ENCODE measurements at regions of chr6 and their contacts with region 1.

Region 1: DNA sequence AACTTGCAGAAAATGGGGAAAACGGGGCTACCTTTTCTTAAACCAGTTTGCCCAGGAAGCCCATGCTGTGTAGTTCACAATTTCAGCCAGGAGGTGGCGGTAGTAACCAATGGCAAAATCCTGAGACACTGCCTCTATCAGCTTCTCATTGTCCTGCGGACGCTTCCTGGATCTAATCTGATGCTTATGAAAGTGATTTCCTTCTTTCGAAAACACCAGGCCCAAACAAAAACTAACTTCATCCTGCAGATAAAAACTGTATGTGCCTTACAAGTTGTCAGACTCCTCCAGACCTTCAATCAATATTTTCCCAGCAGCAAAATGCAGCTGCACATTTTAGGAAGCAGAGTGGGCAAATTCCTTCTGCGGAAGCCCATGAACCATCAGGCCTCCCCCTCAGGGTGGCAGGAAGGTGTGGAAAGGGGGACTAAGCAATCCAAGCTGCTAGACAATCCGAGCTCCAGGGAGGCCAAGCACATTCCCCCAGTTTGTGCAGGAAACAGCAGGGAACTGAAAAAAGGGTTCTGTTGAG is 88.5 kb downstream of the LY86 start:
- DNase-seq: no peak
- H3K4me3 ChIP-seq: no peak overlapping the region
- H3K27me3 ChIP-seq: no peaks in the 10 kb centered on the region
- CTCF ChIP-seq: peak; percentile 92

Region 2: GRCh38 chr6:6689400-6690143 is 12.6 kb after region 1 on chr6:
- CTCF ChIA-PET with region 1: interaction called, 16 read pairs
- POLR2A ChIA-PET with region 1: no interaction called
- DNase-seq: no peak
- H3K4me3 ChIP-seq: no peak overlapping the region
- H3K27me3 ChIP-seq: no peaks in the 10 kb centered on the region
- CTCF ChIP-seq: no peak

Region 3: DNA sequence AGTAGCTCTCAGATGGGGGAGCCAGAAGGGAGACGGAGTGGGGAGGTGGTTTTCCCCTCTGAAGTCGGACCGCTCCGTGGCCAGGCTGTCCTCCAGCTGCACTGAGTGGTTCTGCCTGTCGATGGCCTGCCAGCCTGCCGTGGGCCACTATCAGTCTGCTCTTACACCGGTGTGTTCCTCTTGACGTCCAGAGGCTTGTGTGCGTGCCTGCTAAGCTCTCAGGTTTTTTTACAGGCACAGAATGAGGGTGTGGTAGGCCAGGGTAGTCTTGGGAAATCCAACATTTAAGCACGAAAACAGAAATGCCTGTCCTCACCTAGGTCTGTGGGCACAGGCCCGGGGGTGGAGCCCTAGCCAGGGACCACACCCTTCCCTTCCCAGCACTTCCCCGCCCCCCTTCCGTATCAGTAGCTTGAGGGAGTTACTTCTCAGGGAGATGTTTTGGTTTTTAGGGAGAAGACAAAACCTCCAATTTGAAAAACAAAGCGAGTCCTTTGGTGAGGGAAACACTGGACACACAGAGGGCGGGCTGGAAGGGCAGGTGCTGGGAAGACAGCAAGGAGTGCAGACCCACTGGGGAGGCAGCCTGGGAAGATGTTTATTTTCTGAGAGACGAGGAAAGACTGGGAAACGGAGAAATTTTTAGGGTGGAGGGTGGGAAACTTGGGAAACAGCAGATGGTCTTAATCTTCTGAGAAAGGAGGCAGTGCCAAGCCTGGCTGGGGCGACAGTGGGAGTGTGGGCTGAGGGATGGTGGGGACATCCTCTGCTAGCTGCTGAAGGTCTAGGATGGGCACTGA is 18.0 kb after region 1 on chr6:
- CTCF ChIA-PET with region 1: interaction called, 16 read pairs
- POLR2A ChIA-PET with region 1: no interaction called
- DNase-seq: no peak
- H3K4me3 ChIP-seq: no peak overlapping the region
- H3K27me3 ChIP-seq: no peaks in the 10 kb centered on the region
- CTCF ChIP-seq: no peak

Region 4: DNA sequence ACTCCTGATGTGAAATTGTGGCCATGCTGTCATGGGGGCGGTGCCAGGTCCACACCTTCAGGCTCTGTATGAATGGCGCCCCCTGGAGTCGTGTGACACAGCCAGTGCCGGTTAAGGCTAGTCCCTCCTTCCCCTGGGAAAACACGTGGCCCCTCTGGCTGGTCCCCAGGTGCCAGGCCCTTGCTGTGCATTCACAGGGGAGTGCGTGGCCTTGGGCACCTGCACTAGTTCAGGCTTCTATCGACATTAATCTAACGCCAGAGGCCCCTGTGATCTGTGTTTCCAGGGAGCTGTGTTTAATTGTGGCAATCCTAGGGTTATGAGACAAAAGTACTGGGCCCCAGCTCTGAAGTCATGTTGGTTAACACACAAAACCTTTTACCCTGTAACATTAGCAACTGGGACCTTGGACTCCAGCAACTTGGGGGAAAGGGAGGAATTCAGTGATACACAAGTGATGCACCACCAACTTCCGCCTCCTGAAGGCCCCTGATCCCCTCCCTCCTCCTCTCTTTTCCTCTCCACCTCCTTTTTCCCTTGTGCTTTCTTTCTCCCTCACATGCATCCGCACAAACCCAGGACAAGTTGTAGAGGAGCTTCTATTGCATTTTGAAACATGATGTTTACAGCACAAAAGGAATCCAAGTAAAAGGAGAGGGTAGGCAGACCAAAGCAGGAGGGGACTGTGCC is 562.1 kb after region 1 on chr6:
- CTCF ChIA-PET with region 1: interaction called, 19 read pairs
- POLR2A ChIA-PET with region 1: no interaction called
- DNase-seq: no peak
- H3K4me3 ChIP-seq: no peak overlapping the region
- H3K27me3 ChIP-seq: no peaks in the 10 kb centered on the region
- CTCF ChIP-seq: peak; percentile 69

Region 5: DNA sequence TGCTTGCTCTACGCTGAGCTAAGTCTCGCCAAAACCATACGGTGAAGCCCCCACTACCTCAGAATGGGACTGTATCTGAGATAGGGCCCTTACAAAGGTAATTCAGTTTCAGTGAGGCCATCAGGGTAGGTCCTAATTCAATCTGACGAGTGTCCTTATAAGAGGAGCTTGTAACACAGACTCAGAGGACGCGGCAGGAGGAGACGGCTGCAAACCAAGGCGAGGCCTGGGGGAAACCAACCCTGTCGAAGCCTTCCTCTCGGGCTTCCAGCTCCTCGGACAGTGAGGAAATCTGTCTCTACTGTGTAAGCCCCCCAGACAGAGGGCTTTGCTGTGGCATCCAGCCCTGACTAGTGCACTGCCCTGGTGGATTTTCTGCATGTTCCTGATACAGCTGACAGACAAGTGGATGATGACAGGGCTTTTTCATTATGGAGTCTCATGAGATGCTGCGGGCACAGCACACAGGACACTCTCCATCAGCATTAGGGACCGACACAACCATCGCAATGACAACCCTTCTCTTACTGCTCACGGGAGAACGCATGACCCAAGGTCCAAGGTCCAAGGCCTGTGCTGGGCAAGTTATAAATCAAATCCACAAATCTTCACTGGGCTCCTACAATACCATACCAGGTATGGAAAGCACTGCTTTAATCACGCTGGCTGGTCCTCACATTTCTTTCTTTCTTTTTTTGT is 587.9 kb after region 1 on chr6:
- CTCF ChIA-PET with region 1: no interaction called
- POLR2A ChIA-PET with region 1: interaction called, 13 read pairs
- DNase-seq: no peak
- H3K4me3 ChIP-seq: no peak overlapping the region
- H3K27me3 ChIP-seq: no peaks in the 10 kb centered on the region
- CTCF ChIP-seq: no peak